Head of caudate nucleus (tissue), 42 donors: ENCODE measurements at regions of chr5 and their contacts with region 1.

Region 1: DNA sequence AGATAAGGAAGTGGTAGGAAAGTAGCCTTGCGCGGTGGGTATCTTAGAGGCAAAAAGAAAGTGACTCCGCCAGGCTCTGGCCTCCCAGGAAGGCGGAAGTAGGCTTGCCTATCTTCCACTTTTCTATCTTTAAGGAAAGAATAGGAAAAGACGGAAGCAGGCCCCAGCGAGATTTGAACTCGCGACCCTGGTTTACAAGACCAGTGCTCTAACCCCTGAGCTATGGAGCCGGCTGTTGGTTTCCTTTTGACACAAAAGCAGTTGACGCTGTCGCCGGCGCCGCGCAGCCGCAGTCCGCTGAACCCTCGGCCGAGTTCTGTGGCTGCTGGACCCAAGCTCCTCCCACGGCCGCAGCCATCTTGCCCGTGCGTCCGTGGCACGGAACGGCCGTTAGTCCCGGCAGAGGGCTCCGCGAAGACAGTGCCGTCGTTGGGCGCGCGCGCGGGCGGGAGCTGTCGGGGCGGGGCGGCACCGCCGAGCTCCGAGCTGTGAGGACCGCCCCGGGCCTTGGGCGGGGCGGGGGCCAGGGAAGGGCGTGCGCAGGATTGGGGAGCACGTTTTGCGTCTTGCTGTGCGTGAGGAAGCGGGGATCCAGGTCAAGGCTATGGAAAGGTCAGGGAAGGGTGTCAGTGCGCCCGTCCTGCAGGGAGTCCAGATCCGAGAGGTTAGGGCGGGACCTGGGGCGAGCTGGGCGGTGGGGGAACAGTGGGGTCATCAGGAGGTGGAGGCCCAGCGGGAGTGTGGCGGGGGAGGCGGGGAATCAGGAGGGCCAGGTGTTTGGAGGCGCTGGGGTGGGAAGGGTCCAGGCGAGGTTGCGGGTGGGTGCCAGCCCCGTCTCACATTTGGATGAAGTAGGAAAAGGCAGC is 13.2 kb downstream of the TRIM7 start:
- DNase-seq: peak; percentile 86 to 97 (median 94)

Region 2: DNA sequence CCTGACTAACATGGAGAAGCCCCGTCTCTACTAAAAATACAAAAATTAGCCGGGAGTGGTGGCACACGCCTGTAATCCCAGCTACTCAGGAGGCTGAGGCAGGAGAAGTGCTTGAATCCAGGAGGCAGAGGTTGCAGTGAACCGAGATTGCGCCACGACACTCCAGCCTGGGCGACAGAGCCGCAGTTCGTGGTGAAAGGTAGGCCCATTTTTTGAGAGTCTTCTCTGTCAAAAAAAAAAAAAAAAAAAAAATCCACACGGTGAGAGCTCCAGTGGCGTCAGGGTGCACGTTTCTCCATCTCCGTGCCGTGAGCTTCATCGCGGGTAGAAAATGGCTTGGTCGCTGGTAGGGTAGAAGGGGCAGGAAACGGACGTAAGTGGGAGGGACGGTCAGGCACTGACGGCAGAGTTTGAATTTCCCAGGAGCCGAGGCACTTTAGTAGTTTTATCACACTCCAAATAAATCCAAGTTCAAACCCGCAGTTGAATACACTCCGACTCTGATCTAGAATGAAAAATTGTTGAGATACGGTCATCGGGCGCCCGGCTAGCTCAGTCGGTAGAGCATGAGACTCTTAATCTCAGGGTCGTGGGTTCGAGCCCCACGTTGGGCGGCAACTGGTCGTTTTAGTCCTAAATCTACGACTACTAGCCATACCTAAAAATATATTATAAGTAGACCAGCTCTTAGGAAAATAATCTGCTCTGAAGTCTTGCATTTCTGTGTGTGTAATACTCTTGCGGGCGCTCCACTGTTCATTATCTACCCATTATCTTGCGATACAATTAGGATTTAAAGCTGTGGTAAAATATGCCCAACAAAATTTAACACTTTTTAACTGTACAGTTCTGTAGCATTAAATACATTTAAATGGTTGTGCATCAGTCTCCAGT is 15.7 kb after region 1 on chr5:
- intact Hi-C with region 1: loop called (anchors 2 kb)
- DNase-seq: peak; percentile 14 to 94 (median 78)